ENCODE measurements at regions of chr5 and their contacts with region 1.

Region 1: GRCh38 chr5:83927140-83927733 is 206.6 kb upstream of the HAPLN1 start:
- H3K4me3 ChIP-seq: no peak overlapping the region
- H3K27ac ChIP-seq: no peak overlapping the region
- H3K4me1 ChIP-seq: no peaks in the 10 kb centered on the region
- CTCF ChIP-seq: peak; percentile 39; the same call in 1 of the 2 replicates

Region 2: DNA sequence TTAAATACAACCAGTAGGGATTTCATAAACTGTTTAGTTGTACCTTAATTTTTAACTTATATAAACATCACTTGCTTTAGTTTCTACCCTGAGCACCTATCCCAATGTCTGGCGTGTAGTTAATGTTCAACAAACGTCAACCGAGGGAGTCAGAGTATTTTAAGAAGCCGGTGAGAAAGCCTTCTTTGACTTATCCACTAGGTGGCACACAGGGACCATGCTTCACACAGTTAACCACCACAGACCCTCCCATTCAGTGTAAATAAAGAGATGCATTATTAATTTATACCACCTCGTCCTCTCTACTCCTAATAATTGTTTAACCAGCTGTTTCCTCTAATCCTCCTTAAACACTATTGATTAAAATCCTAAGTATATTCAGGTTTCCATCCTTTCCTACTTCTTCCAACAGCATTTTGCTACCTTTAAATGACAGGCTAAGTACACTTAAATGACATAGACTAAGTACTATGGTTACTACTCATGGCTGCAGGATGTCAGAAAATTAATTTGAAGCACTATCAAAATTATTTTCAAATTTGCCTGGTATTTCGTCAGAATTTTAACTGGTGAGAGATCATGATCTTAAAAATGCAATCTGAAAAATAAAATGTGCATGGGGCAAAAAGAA is 208.9 kb before region 1 on chr5:
- CTCF ChIA-PET with region 1: interaction called, 16 read pairs
- POLR2A ChIA-PET with region 1: no interaction called
- H3K4me3 ChIP-seq: no peak overlapping the region
- H3K27ac ChIP-seq: no peak overlapping the region
- H3K4me1 ChIP-seq: 0 out of 2 replicates have a peak, but pooled peaks cover 2% of the 10 kb centered on the region
- CTCF ChIP-seq: peak; percentile 52; the same call in 1 of the 2 replicates

Region 3: GRCh38 chr5:83914199-83914598 is 13.0 kb before region 1 on chr5:
- CTCF ChIA-PET with region 1: interaction called, 61 read pairs
- POLR2A ChIA-PET with region 1: no interaction called
- H3K4me3 ChIP-seq: no peak overlapping the region
- H3K27ac ChIP-seq: no peak overlapping the region
- H3K4me1 ChIP-seq: no peaks in the 10 kb centered on the region
- CTCF ChIP-seq: no peak

Region 4: DNA sequence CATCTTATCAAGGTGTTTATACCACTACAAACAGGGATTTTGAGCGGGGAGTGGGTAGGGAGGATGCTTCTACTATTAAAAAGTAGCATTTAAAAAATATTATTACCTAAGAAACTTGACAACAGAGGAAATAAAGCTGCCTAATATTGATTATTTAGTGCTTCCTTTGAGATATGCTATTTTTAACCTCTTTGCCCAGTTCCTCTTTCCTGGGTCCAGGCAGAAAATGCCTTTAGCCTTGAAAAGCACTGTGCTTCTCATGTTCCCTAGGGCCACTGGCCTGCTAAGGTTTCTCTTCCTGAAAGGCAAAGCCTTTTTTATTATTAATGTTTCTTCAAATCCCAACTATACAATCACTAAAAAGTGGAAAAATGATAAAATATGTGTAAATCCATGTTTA is 10.6 kb after region 1 on chr5:
- CTCF ChIA-PET with region 1: interaction called, 62 read pairs
- POLR2A ChIA-PET with region 1: no interaction called
- H3K4me3 ChIP-seq: no peak overlapping the region
- H3K27ac ChIP-seq: no peak overlapping the region
- H3K4me1 ChIP-seq: no peaks in the 10 kb centered on the region
- CTCF ChIP-seq: no peak

Measured in HEK293 (cell line).